ENCODE measurements at regions of chr4 and their contacts with region 1.

Region 1: GRCh38 chr4:25767877-25768725 is 94.7 kb downstream of the SEL1L3 start:
- DNase-seq: no peak
- CTCF ChIP-seq: peak; percentile 62

Region 2: GRCh38 chr4:25433966-25434827 is 333.9 kb before region 1 on chr4:
- CTCF ChIA-PET with region 1: interaction called, 49 read pairs
- POLR2A ChIA-PET with region 1: no interaction called
- DNase-seq: no peak
- CTCF ChIP-seq: no peak

Measured in GM10248 (cell line).